Body of pancreas (tissue), 4 donors: ENCODE measurements at regions of chr17 and their contacts with region 1.

Region 1: GRCh38 chr17:40177275-40177874 is at the start of gene RAPGEFL1:
- DNase-seq: peak; percentile 79 to 87 (median 84)
- ATAC-seq: peak; percentile 91
- H3K4me3 ChIP-seq: peak within 1 kb of the TSS; percentile 14 to 41
- H3K27ac ChIP-seq: peak within 1 kb of the TSS in 3 of 4 donors; percentile 12 to 32 (median 23)
- H3K4me1 ChIP-seq: peaks cover 36% of the 10 kb centered on the region
- H3K27me3 ChIP-seq: no peaks in the 10 kb centered on the region
- CTCF ChIP-seq: no peak
- POLR2A ChIP-seq: peak in 2 of 3 donors; percentile 27 to 31
- total RNA-seq, gene RAPGEFL1: 7.0 to 7.3 TPM

Region 2: DNA sequence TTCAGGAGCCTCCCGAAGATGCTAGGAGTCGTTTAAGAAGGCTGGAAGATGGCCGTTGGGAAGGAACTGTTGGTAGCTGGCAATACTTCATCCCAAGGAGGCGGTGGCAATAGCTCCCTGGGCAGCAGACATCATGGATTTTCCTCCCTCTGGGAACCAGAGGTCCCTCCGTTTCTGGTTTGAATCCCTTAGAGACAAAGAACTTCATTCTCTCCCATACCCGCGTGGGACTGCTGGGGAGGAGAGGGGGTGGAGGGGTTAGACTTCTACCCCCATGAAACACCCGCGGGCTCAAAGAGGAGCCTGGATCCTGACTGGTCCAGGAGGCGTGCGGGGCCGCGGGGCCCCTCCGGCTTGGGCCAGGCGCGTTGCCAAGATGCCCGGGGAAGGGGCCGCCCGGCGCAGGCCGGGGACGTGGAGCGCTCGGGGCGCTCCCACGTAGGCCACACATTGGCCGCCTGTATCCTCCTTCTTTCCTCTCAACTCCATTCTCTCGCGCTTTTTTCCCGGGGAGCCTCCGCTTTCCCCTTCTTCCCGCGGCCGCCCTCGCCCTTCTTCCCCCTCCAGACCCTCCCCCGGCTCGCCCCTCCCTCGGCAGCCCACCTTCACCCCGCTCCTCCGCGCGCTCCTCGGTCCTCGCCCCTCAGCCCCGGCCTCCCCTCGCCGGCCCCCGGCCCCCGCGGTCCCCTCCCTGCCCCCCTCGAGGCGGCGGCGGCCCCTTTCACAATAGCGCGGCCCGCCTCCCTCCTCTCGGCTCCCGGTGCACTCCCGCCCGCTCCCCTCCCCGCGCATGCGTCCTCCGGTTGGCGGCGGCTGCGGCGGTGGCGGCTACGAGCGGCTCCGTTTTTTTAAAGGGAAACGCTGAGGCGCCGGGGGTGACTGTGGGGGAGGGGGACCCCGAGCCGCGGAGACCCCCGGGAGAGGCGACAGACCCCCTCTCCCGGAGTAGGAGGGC is 55.9 kb before region 1 on chr17 and contains the start of gene MSL1:
- intact Hi-C with region 1: loop called (anchors 10 kb)
- DNase-seq: peak; percentile 89 to 90 (median 89)
- ATAC-seq: peak; percentile 82
- H3K4me3 ChIP-seq: peak within 1 kb of the TSS; percentile 95 to 98
- H3K27ac ChIP-seq: peak within 1 kb of the TSS; percentile 92 to 96 (median 96)
- H3K4me1 ChIP-seq: peaks cover 22% of the 10 kb centered on the region
- H3K27me3 ChIP-seq: no peaks in the 10 kb centered on the region
- CTCF ChIP-seq: no peak
- POLR2A ChIP-seq: peak in 2 of 3 donors; percentile 43 to 61
- total RNA-seq, gene MSL1: 75.5 to 157 TPM

Region 3: GRCh38 chr17:40230670-40231069 is 53.3 kb after region 1 on chr17:
- intact Hi-C with region 1: no loop called
- DNase-seq: no peak
- ATAC-seq: no peak
- H3K4me3 ChIP-seq: no peak overlapping the region
- H3K27ac ChIP-seq: no peak overlapping the region
- H3K4me1 ChIP-seq: peaks cover 4% of the 10 kb centered on the region
- H3K27me3 ChIP-seq: no peaks in the 10 kb centered on the region
- CTCF ChIP-seq: no peak
- POLR2A ChIP-seq: no peak

Region 4: DNA sequence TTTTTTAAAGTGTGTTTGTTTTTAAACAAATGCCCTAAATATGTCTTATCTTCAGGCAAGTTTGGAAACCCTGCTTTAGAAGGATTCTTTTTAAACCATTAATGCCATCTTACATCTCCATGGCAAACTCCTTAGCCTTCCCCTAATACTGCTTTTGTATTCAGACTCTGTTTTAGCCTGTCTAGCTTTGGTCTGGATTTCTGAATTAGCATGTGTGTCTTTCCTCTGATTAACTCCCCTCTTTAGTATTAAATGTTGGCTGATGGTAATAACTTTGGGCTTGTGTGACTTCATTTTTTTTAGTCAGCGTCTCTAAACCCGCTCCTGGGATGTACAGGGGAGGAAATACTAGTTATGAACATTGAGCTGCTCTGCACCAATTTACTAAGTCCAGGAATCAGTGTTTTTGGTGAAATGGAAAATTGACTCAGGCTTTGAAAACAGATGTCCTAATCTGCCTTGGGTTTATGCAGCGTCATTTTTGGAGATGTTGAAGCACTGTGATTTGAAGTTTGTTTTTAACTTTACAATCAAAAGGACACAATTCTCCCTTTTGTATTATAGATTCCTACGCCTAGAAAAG is 64.0 kb after region 1 on chr17:
- intact Hi-C with region 1: no loop called
- DNase-seq: no peak
- ATAC-seq: no peak
- H3K4me3 ChIP-seq: no peak overlapping the region
- H3K27ac ChIP-seq: no peak overlapping the region
- H3K4me1 ChIP-seq: peaks cover 24% of the 10 kb centered on the region
- H3K27me3 ChIP-seq: no peaks in the 10 kb centered on the region
- CTCF ChIP-seq: no peak
- POLR2A ChIP-seq: no peak

Region 5: GRCh38 chr17:40317880-40318829 is 140.8 kb after region 1 on chr17:
- intact Hi-C with region 1: no loop called
- DNase-seq: peak; percentile 95 to 97 (median 96)
- ATAC-seq: peak; percentile 94
- H3K4me3 ChIP-seq: peak overlapping the region; percentile 59 to 84
- H3K27ac ChIP-seq: peak overlapping the region; percentile 41 to 89 (median 75)
- H3K4me1 ChIP-seq: peaks cover 92% of the 10 kb centered on the region
- H3K27me3 ChIP-seq: no peaks in the 10 kb centered on the region
- CTCF ChIP-seq: no peak
- POLR2A ChIP-seq: peak; percentile 54 to 70 (median 65)